HCT116 (cell line): ENCODE measurements at regions of chr9 and their contacts with region 1.

Region 1: DNA sequence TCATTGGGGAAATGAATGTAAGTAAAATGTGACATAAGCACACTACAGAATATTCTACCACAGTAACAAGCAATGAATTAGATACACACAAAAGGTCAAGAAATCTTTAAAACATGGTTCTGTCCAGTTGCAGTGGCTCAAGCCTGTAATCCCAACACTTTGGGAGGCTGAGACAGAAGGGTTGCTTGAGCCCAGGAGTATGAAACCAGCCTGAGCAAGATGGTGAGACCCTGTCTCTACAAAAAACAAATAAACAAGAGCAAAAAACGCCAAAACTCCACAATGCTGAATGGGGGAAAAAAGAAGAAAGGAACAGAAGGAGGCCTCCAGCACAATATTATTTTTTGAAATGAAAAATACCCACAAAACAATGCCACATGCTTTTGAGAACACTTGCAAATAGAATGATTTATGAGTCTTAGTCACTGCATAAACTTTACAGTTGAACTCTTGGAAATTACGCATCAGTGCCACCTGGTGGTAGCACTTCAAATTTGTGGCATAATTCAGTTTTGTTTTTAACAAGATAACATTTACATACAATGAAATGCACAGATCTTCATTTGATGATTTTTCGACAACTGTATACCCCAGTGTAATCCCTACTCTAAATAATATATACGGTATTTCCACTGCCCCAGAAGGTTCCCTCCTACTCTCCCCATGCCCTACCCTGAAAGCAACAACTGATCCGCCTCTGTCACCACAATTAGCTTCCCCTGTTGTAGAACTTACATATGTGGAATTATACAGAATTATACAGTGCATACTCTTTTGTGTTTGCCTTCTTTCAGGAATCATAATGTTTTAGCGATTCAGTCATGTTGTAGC is 14.4 kb upstream of the SPINK4 start:
- DNase-seq: peak; percentile 68
- ATAC-seq: no peak
- H3K4me3 ChIP-seq: no peak overlapping the region
- H3K27ac ChIP-seq: no peak overlapping the region
- H3K4me1 ChIP-seq: peaks cover 17 to 26% of the 10 kb centered on the region in 2 experiments
- H3K27me3 ChIP-seq: no peaks in the 10 kb centered on the region
- CTCF ChIP-seq: peak in 2 of 3 experiments; percentile 54 to 77; a peak in 4 of 6 replicates
- POLR2A ChIP-seq: no peak
- RAD21 ChIP-seq: no peak

Region 2: DNA sequence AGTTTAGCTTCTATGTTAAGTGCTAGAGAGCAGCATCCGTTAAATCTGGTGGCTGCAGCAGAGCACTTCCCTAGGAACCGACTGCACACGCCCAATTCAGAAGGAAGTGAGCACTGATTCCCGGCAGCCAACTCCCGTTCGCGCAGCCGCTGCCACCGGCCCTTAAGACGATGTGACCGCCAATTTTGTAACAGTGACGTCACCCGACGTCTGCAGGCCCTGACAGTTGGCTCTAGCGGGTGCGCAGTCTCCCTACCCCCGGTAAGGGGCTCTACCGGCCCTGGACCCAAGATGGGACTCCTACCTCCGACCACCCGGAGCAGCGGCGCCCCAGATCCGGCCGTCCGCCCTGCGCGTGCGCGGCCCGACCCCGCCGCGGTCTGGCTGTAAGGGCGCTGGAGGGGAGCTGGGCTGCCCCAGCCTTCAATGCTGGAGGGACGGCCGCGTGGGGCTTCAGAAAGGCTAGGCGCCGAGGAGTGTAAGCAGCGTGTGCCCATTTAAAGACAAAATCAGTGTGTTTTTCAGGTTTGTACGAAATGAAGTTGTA is 181.3 kb before region 1 on chr9:
- CTCF ChIA-PET with region 1: no interaction called
- POLR2A ChIA-PET with region 1: no interaction called
- RAD21 ChIA-PET with region 1: no interaction called
- intact Hi-C with region 1: no loop called
- DNase-seq: no peak
- ATAC-seq: no peak
- H3K4me3 ChIP-seq: no peak overlapping the region
- H3K27ac ChIP-seq: no peak overlapping the region
- H3K4me1 ChIP-seq: no peaks in the 10 kb centered on the region
- H3K27me3 ChIP-seq: no peaks in the 10 kb centered on the region
- CTCF ChIP-seq: no peak
- POLR2A ChIP-seq: no peak
- RAD21 ChIP-seq: no peak

Region 3: GRCh38 chr9:33076358-33077004 is 149.1 kb before region 1 on chr9 and contains the start of gene SMU1:
- CTCF ChIA-PET with region 1: interaction called, 5 read pairs
- POLR2A ChIA-PET with region 1: no interaction called
- RAD21 ChIA-PET with region 1: no interaction called
- intact Hi-C with region 1: loop called (anchors 1 kb)
- DNase-seq: peak; percentile 96
- ATAC-seq: peak; percentile 98
- H3K4me3 ChIP-seq: peak within 1 kb of the TSS; percentile 96 to 99
- H3K27ac ChIP-seq: peak within 1 kb of the TSS; percentile 46
- H3K4me1 ChIP-seq: peaks cover 5 to 14% of the 10 kb centered on the region in 2 experiments; a peak in 3 of 4 replicates
- H3K27me3 ChIP-seq: no peaks in the 10 kb centered on the region
- CTCF ChIP-seq: no peak
- POLR2A ChIP-seq: peak; percentile 61
- RAD21 ChIP-seq: no peak
- total RNA-seq, gene SMU1: 30.5 TPM

Region 4: DNA sequence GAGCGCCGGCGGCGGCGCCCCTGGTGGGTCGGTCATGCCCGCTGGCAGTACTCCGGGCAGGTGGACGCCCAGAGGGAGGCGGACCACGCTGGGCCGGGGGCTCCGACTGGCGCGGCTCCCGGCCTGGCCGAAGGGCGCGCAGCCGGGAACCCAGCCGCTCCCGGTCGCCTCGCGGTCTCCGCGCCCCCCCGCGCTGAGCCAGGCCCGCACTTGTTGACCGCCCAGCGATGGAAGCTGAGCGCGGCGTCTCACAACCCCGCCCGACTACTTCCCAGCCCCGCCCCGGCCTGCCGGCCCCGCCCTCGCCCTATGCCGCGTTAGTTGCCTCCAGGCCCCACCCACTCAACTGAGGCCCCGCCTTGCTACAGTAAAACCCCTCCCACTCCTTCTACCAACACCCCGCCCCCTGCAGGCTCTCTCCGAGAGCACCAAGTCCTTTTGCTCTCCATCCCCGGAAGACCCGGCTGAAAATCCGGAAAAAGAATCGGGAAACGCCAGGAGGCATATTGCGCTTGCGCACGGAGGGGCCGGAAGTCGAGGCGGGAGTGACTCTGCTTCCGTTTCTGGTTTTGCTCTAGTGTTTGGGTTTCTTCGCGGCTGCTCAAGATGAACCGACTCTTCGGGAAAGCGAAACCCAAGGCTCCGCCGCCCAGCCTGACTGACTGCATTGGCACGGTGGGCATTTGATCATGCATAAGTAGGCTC is 39.1 kb after region 1 on chr9 and contains the starts of genes BAG1 and CHMP5:
- CTCF ChIA-PET with region 1: no interaction called
- POLR2A ChIA-PET with region 1: no interaction called
- RAD21 ChIA-PET with region 1: no interaction called
- intact Hi-C with region 1: loop called (anchors 2 kb)
- DNase-seq: peak; percentile 98
- ATAC-seq: peak; percentile 93
- H3K4me3 ChIP-seq: peak within 1 kb of the TSS; percentile 98 to 99
- H3K27ac ChIP-seq: peak within 1 kb of the TSS; percentile 87
- H3K4me1 ChIP-seq: peaks cover 3 to 16% of the 10 kb centered on the region in 2 experiments; a peak in 3 of 4 replicates
- H3K27me3 ChIP-seq: no peaks in the 10 kb centered on the region
- CTCF ChIP-seq: peak in 1 of 3 experiments; percentile 43; a peak in 2 of 6 replicates
- POLR2A ChIP-seq: peak; percentile 31
- RAD21 ChIP-seq: no peak
- total RNA-seq, gene BAG1: 58.2 TPM
- total RNA-seq, gene CHMP5: 61.8 TPM

Region 5: DNA sequence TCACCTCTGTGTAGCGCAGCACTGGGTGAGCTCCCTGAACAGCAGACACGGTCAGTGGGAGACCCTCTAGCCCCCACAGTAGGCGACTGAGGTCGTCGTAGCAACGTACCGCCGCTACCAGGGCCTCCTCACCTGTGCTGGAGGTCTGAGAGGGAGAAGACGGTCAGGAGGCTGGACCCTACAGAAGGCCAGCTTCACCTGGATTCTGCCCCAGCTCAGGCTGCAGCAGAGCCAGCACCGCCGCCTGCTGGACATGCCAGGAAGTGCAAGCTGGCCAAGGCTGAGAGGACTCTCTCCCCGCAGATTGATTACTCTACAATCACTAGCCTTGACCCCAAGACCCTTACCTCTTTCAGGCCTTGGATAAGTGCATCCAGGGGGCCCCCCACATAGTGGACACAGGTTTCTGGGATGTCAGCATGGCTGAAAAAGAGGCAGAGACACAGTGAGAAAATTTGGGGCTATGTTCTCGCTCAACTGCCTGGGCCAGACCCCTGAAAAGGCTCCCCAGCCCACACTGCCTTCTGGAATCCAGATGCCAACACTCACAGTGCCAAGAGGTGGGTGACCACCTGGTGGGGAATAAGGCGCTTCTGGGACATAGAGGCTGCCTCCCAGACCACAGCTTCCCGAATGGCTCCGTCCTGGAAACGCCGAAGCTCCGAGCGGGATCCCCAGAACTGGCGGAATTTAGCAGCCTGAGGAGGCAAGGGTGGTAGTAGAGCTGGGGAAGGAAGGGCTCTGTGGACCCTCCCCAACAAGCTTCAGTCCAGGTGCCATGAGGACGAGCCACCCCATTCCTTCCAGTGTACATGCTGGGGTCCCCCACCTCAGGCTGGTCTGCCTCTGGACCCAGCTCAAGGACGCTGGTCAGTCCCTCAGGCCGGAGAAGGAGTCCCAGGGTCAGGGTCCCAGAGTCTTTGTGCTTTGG is 241.3 kb after region 1 on chr9:
- CTCF ChIA-PET with region 1: interaction called, 10 read pairs
- POLR2A ChIA-PET with region 1: no interaction called
- RAD21 ChIA-PET with region 1: no interaction called
- intact Hi-C with region 1: loop called (anchors 2 kb)
- DNase-seq: no peak
- ATAC-seq: peak; percentile 84
- H3K4me3 ChIP-seq: no peak overlapping the region
- H3K27ac ChIP-seq: no peak overlapping the region
- H3K4me1 ChIP-seq: peaks cover 0 to 1% of the 10 kb centered on the region in 2 experiments; a peak in 2 of 4 replicates
- H3K27me3 ChIP-seq: no peaks in the 10 kb centered on the region
- CTCF ChIP-seq: peak; percentile 88 to 97 (median 93)
- POLR2A ChIP-seq: no peak
- RAD21 ChIP-seq: peak; percentile 95